Dorsolateral prefrontal cortex (tissue), 120 donors: ENCODE measurements at regions of chr21 and their contacts with region 1.

Region 1: GRCh38 chr21:31088315-31088714 is 50.0 kb upstream of the KRTAP19-8 start:
- DNase-seq: no peak
- H3K4me3 ChIP-seq: no peak overlapping the region
- H3K27ac ChIP-seq: no peak overlapping the region
- H3K27me3 ChIP-seq: no peaks in the 10 kb centered on the region
- CTCF ChIP-seq: no peak

Region 2: GRCh38 chr21:30340441-30341241 is 747.7 kb before region 1 on chr21:
- intact Hi-C with region 1: loop called (anchors 5 kb)
- DNase-seq: peak in 2 of 10 donors; percentile 49 to 58
- H3K4me3 ChIP-seq: no peak overlapping the region
- H3K27ac ChIP-seq: no peak overlapping the region
- H3K27me3 ChIP-seq: peaks cover 0 to 5% (median 0%) of the 10 kb centered on the region in 45 donors
- CTCF ChIP-seq: peak; percentile 56 to 91 (median 80)

Region 3: DNA sequence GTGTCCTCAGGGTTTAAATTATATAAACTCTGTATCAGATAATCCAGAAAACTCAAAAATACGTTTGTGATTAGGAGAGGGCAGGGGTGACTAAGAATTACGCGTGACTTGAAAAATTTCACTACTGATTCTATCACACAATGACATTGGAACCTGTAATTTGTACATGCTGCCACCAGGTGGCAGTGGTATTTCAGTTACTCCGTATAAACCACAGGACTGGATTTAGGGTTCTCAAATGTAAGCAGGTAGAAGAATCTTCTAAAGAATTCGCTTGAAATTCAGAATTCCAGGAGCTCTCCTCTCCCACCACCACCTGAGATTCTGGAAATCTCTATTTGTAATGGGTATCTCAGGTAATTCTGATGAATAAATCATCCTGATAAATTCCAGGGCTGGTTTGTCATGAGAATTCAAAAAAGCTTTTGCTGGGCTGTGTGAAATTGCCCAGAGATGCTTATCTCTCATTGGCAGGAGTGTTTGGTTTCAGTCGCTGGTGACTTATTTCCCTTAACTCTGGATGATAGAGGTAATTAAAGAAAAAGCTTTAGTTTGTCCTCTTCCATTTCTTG is 257.0 kb before region 1 on chr21:
- intact Hi-C with region 1: loop called in 1 of 2 experiments (anchors 5 kb)
- DNase-seq: no peak
- H3K4me3 ChIP-seq: no peak overlapping the region
- H3K27ac ChIP-seq: no peak overlapping the region
- H3K27me3 ChIP-seq: peaks cover 0 to 4% (median 0%) of the 10 kb centered on the region in 45 donors
- CTCF ChIP-seq: peak in 49 of 56 donors; percentile 16 to 54 (median 35)